Activated CD4-positive, alpha-beta memory T cell treated with anti-CD3 and anti-CD28 coated beads, Interleukin-2, amount 10 ng/mL, durations not matched to agents 7 days and 5 days (primary cell): ENCODE measurements at regions of chr20 and their contacts with region 1.

Region 1: DNA sequence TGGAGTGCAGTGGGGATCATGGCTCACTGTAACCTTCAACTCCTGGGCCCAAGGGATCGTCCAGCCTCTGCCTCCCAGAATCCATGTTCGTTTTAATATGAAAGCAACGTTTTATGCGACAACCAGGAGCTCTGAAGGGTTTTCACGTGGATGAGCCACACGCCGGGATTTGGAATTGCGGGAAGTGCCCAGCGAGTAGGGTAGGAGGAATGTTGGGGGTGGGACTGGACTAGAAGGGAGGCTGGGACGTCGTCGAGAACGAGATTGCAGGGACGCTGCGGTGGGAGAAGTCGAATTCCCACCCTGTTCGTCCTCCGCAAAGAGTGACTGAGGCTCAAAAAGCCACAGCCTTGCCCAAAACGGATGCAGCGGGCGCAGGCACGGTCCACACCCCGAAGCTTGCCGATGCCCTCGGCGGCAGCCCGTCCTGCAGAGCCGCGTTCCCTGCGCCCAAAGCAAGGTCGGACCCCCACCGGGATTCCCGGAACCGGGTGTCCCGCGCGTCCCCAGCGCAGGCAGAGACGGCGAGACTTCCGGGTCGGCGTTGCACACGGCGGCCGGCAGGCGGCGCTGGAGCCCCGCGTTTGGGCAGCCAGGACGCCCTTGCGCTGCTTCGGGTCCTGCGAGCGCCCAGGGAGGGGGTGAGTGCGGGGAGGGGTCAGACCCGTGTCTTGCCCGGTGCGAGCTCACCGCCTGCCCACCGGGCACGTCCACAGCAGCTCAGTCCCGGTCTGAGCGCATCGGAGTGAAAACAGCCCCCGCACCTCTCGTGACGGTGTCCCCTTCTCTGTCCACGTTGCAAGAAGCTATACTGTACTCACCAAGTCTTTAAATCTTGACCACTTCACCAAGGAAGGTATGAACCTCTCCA is 87.8 kb downstream of the DHX35 start:
- DNase-seq: peak; percentile 78
- H3K4me3 Mint-ChIP-seq: peak overlapping the region; percentile 76
- H3K27ac Mint-ChIP-seq: peak overlapping the region; percentile 49
- H3K4me1 Mint-ChIP-seq: peaks cover 15% of the 10 kb centered on the region
- H3K27me3 Mint-ChIP-seq: peaks cover 8% of the 10 kb centered on the region

Region 2: GRCh38 chr20:38900606-38901005 is 149.3 kb before region 1 on chr20:
- CTCF ChIA-PET with region 1: no interaction called
- POLR2A ChIA-PET with region 1: no interaction called
- DNase-seq: no peak
- H3K4me3 Mint-ChIP-seq: no peak overlapping the region
- H3K27ac Mint-ChIP-seq: no peak overlapping the region
- H3K4me1 Mint-ChIP-seq: peaks cover 15% of the 10 kb centered on the region
- H3K27me3 Mint-ChIP-seq: no peaks in the 10 kb centered on the region

Region 3: GRCh38 chr20:38926142-38926933 is 123.6 kb before region 1 on chr20 and contains the start of gene FAM83D:
- CTCF ChIA-PET with region 1: interaction called, 23 read pairs
- POLR2A ChIA-PET with region 1: interaction called, 10 read pairs
- DNase-seq: peak; percentile 98
- H3K4me3 Mint-ChIP-seq: peak within 1 kb of the TSS; percentile 81
- H3K27ac Mint-ChIP-seq: peak within 1 kb of the TSS; percentile 62
- H3K4me1 Mint-ChIP-seq: peaks cover 40% of the 10 kb centered on the region
- H3K27me3 Mint-ChIP-seq: no peaks in the 10 kb centered on the region
- total RNA-seq, gene FAM83D: 18.9 to 19.9 TPM

Region 4: DNA sequence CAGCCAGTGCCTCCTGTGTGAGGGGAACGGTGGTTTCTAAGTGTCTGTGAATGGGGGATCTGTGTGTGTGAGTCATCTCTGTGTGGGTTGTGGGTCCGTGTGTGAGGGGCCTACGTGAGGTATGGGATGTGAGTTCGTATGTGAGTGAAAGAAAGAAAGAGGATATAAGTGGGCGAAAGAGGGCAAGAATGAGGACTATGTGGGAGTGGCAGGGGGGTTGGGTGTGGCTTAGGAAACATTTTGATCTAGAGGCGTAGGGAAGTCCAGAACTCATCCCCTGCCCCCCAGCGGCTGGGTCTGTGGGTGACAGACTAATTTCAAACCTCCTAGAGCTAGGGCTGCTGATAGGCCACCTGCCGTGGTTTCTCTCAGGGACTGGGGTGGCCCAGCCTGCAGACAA is 52.3 kb before region 1 on chr20:
- CTCF ChIA-PET with region 1: interaction called, 16 read pairs
- POLR2A ChIA-PET with region 1: no interaction called
- DNase-seq: peak; percentile 53
- H3K4me3 Mint-ChIP-seq: no peak overlapping the region
- H3K27ac Mint-ChIP-seq: peak overlapping the region; percentile 24
- H3K4me1 Mint-ChIP-seq: peaks cover 23% of the 10 kb centered on the region
- H3K27me3 Mint-ChIP-seq: no peaks in the 10 kb centered on the region

Region 5: DNA sequence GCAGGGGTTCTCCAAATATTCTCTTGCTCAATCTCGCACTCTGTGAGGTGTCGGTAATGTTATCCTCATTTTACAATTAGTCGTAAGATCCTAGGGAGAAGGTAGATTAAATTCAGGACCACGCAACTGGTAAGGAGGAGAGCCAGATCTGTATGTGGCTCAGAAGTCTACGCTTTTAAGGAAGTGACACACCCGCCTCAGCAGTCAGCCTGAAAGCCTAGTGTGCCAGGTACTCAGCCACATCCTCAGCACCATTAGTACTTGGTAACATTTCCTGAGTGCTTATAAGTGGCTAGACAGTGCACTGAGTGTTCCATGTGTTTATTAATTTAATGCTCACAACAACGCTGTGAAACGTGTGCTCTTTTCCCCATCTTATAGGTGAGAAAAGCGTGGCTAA is 24.0 kb before region 1 on chr20:
- CTCF ChIA-PET with region 1: interaction called, 10 read pairs
- POLR2A ChIA-PET with region 1: no interaction called
- DNase-seq: peak; percentile 62
- H3K4me3 Mint-ChIP-seq: peak overlapping the region; percentile 9
- H3K27ac Mint-ChIP-seq: peak overlapping the region; percentile 78
- H3K4me1 Mint-ChIP-seq: peaks cover 51% of the 10 kb centered on the region
- H3K27me3 Mint-ChIP-seq: no peaks in the 10 kb centered on the region

Region 6: DNA sequence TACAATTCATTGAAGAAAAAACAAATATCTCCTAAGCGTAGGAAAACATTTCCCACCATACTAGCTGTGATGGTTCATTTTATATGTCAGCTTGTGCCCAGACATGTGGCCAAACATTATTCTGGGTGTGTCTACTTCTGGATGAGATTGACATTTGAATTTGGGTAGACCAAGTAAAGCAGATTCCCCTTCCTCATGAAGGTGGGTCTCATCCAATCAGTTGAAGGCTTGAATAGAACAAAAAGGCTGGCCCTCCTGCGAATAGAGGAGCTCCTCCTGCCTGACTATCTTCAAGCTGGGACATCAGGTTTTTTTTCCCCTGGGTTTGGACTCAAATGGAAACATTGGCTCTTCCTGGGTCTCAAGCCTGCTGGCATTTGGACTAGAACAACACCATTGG is 25.8 kb after region 1 on chr20:
- CTCF ChIA-PET with region 1: interaction called, 94 read pairs
- POLR2A ChIA-PET with region 1: interaction called, 5 read pairs
- DNase-seq: no peak
- H3K4me3 Mint-ChIP-seq: no peak overlapping the region
- H3K27ac Mint-ChIP-seq: no peak overlapping the region
- H3K4me1 Mint-ChIP-seq: peaks cover 6% of the 10 kb centered on the region
- H3K27me3 Mint-ChIP-seq: peaks cover 29% of the 10 kb centered on the region

Region 7: DNA sequence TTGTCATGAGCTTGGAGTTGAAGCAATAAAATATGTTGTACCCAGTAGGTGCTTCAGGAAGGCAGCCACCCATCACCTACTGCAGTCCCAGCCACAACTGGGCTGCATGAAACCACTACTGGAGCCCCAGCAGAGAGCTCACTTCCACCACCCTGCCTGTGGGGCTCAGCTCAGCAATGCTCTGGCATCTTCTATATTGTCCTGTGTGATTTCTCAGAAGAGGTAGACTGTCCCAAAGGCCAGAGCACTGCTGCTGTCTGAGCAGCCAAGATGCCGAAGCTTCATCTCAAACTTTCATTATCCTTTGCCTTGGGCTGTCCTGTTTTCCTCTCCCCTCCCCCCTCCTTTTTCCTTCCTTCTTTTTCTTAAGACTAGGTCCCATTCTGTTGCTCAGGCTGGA is 39.1 kb after region 1 on chr20:
- CTCF ChIA-PET with region 1: interaction called, 94 read pairs
- POLR2A ChIA-PET with region 1: no interaction called
- DNase-seq: no peak
- H3K4me3 Mint-ChIP-seq: no peak overlapping the region
- H3K27ac Mint-ChIP-seq: no peak overlapping the region
- H3K4me1 Mint-ChIP-seq: no peaks in the 10 kb centered on the region
- H3K27me3 Mint-ChIP-seq: peaks cover 6% of the 10 kb centered on the region